IMR-90 (cell line): ENCODE measurements at regions of chr6 and their contacts with region 1.

Region 1: GRCh38 chr6:29649701-29650673 is 6.9 kb upstream of the MOG start:
- DNase-seq: peak; percentile 94
- ATAC-seq: peak; percentile 97
- H3K4me3 ChIP-seq: peak overlapping the region; percentile 50
- H3K27ac ChIP-seq: peak overlapping the region; percentile 19; the same call in 1 of the 2 replicates
- H3K4me1 ChIP-seq: no peaks in the 10 kb centered on the region
- H3K27me3 ChIP-seq: peaks cover 1% of the 10 kb centered on the region
- CTCF ChIP-seq: peak; percentile 98
- POLR2A ChIP-seq: 0 out of 2 replicates have a peak, but pooled peaks have one; percentile 29
- RAD21 ChIP-seq: peak; percentile 21; the same call in 1 of the 2 replicates

Region 2: GRCh38 chr6:29632789-29633533 is 17.0 kb before region 1 on chr6 and contains the start of gene GABBR1:
- CTCF ChIA-PET with region 1: interaction called, 11 read pairs
- POLR2A ChIA-PET with region 1: no interaction called
- dilution Hi-C with region 1: no loop called
- in situ Hi-C with region 1: no loop called
- intact Hi-C with region 1: no loop called
- DNase-seq: peak; percentile 79
- ATAC-seq: peak; percentile 90
- H3K4me3 ChIP-seq: peak within 1 kb of the TSS; percentile 77
- H3K27ac ChIP-seq: peak within 1 kb of the TSS; percentile 62
- H3K4me1 ChIP-seq: peaks cover 11% of the 10 kb centered on the region
- H3K27me3 ChIP-seq: no peaks in the 10 kb centered on the region
- CTCF ChIP-seq: no peak
- POLR2A ChIP-seq: no peak
- RAD21 ChIP-seq: no peak
- total RNA-seq, gene GABBR1: 5.9 and 6.9 TPM in 2 replicates

Region 3: GRCh38 chr6:29665942-29666825 is 16.2 kb after region 1 on chr6:
- CTCF ChIA-PET with region 1: interaction called, 33 read pairs
- POLR2A ChIA-PET with region 1: no interaction called
- dilution Hi-C with region 1: no loop called
- in situ Hi-C with region 1: no loop called
- intact Hi-C with region 1: no loop called
- DNase-seq: no peak
- ATAC-seq: no peak
- H3K4me3 ChIP-seq: no peak overlapping the region
- H3K27ac ChIP-seq: no peak overlapping the region
- H3K4me1 ChIP-seq: no peaks in the 10 kb centered on the region
- H3K27me3 ChIP-seq: peaks cover 2% of the 10 kb centered on the region; the same call in 1 of the 2 replicates
- CTCF ChIP-seq: no peak
- POLR2A ChIP-seq: no peak
- RAD21 ChIP-seq: no peak